ENCODE measurements at regions of chr9 and their contacts with region 1.

Region 1: GRCh38 chr9:70111042-70111602 is 67.5 kb downstream of the MAMDC2 start:
- DNase-seq: peak; percentile 55
- ATAC-seq: no peak
- H3K4me3 ChIP-seq: no peak overlapping the region
- H3K4me3 Mint-ChIP-seq: no peak overlapping the region
- H3K27ac ChIP-seq: no peak overlapping the region
- H3K27ac Mint-ChIP-seq: no peak overlapping the region
- H3K4me1 ChIP-seq: peaks cover 5 to 7% of the 10 kb centered on the region in 2 donors
- H3K4me1 Mint-ChIP-seq: peaks cover 9% of the 10 kb centered on the region
- H3K27me3 ChIP-seq: peaks cover 0 to 3% (median 1%) of the 10 kb centered on the region in 4 experiments
- H3K27me3 Mint-ChIP-seq: peaks cover 27% of the 10 kb centered on the region
- CTCF ChIP-seq: peak; percentile 95

Region 2: GRCh38 chr9:69971643-69972449 is 139.3 kb before region 1 on chr9:
- CTCF ChIA-PET with region 1: interaction called, 41 read pairs
- POLR2A ChIA-PET with region 1: no interaction called
- intact Hi-C with region 1: no loop called
- DNase-seq: peak; percentile 52
- ATAC-seq: no peak
- H3K4me3 ChIP-seq: no peak overlapping the region
- H3K4me3 Mint-ChIP-seq: no peak overlapping the region
- H3K27ac ChIP-seq: no peak overlapping the region
- H3K27ac Mint-ChIP-seq: no peak overlapping the region
- H3K4me1 ChIP-seq: no peaks in the 10 kb centered on the region
- H3K4me1 Mint-ChIP-seq: no peaks in the 10 kb centered on the region
- H3K27me3 ChIP-seq: peaks cover 0 to 4% (median 0%) of the 10 kb centered on the region in 4 experiments
- H3K27me3 Mint-ChIP-seq: peaks cover 12% of the 10 kb centered on the region
- CTCF ChIP-seq: peak; percentile 74

Region 3: DNA sequence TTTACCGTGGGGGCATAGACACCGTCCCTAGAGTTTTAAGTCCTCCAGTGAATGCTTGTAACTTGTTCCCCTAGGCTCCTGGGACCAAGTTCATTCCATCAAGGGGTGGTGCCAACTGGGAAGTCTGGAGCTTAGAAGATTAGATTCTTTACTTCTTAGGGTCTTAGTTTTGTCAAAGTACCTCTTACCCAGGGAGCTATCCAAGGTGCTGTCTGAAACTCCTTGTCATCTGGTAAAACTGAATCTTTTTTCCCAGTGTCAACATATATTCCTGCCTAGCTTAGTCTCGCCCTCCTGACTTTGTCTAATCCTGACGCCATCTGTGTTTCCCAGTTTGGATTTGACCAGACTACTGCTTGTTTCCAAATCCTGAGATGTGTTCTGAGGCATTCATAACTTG is 25.9 kb before region 1 on chr9:
- CTCF ChIA-PET with region 1: interaction called, 12 read pairs
- POLR2A ChIA-PET with region 1: no interaction called
- intact Hi-C with region 1: no loop called
- DNase-seq: no peak
- ATAC-seq: no peak
- H3K4me3 ChIP-seq: no peak overlapping the region
- H3K4me3 Mint-ChIP-seq: no peak overlapping the region
- H3K27ac ChIP-seq: no peak overlapping the region
- H3K27ac Mint-ChIP-seq: no peak overlapping the region
- H3K4me1 ChIP-seq: no peaks in the 10 kb centered on the region
- H3K4me1 Mint-ChIP-seq: no peaks in the 10 kb centered on the region
- H3K27me3 ChIP-seq: no peaks in the 10 kb centered on the region
- H3K27me3 Mint-ChIP-seq: peaks cover 12% of the 10 kb centered on the region
- CTCF ChIP-seq: no peak